Activated CD4-positive, alpha-beta memory T cell treated with anti-CD3 and anti-CD28 coated beads for 36 hours (primary cell): ENCODE measurements at regions of chrX and their contacts with region 1.

Region 1: GRCh38 chrX:120250522-120251271 is at the start of gene ZBTB33:
- DNase-seq: peak; percentile 92
- H3K4me3 Mint-ChIP-seq: peak within 1 kb of the TSS; percentile 92
- H3K27ac Mint-ChIP-seq: peak within 1 kb of the TSS; percentile 93
- H3K4me1 Mint-ChIP-seq: peaks cover 25% of the 10 kb centered on the region
- H3K27me3 Mint-ChIP-seq: no peaks in the 10 kb centered on the region
- total RNA-seq, gene ZBTB33: 13.6 to 14.0 TPM

Region 2: GRCh38 chrX:120269373-120270035 is 18.8 kb after region 1 on chrX:
- CTCF ChIA-PET with region 1: interaction called, 3 read pairs
- POLR2A ChIA-PET with region 1: no interaction called
- intact Hi-C with region 1: loop called (anchors 2 kb)
- DNase-seq: peak; percentile 26
- H3K4me3 Mint-ChIP-seq: no peak overlapping the region
- H3K27ac Mint-ChIP-seq: peak overlapping the region; percentile 69
- H3K4me1 Mint-ChIP-seq: peaks cover 8% of the 10 kb centered on the region
- H3K27me3 Mint-ChIP-seq: no peaks in the 10 kb centered on the region

Region 3: DNA sequence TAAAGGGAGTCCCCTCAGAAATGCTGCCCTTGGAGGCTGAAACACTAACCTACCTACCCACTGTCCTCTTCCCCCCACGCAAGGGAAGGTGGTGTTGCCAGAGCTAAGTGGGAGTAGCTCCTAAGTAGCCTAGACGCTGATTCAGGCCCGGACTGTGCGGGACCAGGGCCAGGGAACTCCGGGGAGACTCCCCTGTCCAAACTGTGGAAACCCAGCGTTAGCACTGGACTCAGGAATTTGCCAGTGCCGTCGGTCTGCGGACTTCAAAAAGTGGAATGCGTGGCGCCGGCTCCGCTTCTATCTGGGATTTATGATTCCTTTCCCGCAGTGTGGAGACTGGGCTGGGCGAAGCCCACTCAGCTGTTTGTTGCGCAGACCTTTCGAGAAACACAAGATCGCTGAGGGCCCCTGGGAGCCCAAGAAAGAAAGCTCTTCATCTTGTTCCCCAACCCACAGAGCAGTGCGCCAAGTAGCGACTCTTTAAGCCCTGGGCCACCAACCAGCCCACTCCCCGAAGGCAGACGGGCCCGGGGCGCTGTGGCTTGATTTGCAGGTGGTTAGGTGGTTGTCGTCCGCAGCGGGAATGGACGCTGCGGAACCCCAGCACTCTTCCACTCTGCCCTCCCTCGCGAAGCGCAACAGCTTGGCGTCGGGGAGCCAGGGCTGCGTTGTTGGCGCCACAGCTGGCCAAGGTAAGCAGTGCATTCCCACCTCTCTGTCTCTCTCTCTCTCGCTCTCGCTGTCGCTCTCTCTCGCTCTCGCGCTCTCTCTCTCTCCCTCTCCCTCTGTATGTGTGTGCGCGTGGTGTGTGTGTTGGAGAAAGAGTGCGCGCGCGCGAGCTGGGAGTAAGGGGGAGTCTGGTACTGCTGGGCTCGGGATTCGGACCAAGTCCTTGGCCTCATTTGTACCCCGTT is 58.5 kb after region 1 on chrX:
- CTCF ChIA-PET with region 1: interaction called, 12 read pairs
- POLR2A ChIA-PET with region 1: interaction called, 3 read pairs
- intact Hi-C with region 1: no loop called
- DNase-seq: peak; percentile 82
- H3K4me3 Mint-ChIP-seq: peak overlapping the region; percentile 71
- H3K27ac Mint-ChIP-seq: peak overlapping the region; percentile 46
- H3K4me1 Mint-ChIP-seq: peaks cover 10% of the 10 kb centered on the region
- H3K27me3 Mint-ChIP-seq: peaks cover 11% of the 10 kb centered on the region

Region 4: DNA sequence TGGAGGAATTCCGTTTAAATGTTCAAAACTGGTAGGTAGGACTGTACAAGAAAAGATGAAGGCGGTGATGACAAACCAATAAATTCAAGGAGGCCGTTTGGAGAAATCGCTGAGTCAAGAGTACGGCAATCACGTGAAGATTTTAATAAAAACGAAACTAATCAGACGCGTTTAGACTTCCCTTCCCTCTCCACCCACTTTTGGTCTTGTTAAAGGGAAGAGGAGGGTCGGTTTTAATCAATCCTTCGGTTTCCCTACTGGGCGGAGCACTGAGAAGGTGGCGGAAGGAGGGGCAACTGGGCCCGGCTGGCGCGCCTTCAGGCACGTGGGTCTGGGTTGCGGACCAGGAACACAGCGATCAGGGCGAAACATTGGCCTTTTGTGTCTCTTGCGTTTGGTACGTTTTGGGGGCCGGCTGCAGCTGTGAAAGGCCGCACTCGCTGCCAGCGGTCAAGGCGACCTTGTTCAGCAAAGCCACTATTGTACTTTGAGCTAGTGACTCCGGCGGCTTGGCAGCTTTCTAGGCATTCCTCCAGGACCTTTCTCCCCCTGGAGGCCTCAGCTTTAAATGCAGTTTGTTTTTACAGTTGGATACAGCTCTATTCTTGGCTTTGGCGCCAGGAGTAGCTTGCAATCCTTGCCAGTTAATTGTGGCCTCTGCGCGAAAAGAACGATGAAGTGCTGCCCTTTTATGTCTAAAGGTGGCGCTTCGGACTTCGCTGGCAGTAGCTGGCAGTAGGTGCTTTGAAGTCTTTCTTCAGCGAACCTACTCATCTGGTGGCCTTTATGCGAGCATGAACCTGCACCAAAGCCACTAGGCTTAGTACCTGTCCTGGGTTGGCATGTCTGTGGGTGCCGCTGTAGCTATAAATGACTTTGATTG is 235.2 kb after region 1 on chrX:
- CTCF ChIA-PET with region 1: interaction called, 5 read pairs
- POLR2A ChIA-PET with region 1: no interaction called
- intact Hi-C with region 1: loop called (anchors 1 kb)
- DNase-seq: peak; percentile 69
- H3K4me3 Mint-ChIP-seq: peak overlapping the region; percentile 69
- H3K27ac Mint-ChIP-seq: peak overlapping the region; percentile 86
- H3K4me1 Mint-ChIP-seq: peaks cover 26% of the 10 kb centered on the region
- H3K27me3 Mint-ChIP-seq: no peaks in the 10 kb centered on the region